ENCODE measurements at regions of chr2 and their contacts with region 1.

Region 1: DNA sequence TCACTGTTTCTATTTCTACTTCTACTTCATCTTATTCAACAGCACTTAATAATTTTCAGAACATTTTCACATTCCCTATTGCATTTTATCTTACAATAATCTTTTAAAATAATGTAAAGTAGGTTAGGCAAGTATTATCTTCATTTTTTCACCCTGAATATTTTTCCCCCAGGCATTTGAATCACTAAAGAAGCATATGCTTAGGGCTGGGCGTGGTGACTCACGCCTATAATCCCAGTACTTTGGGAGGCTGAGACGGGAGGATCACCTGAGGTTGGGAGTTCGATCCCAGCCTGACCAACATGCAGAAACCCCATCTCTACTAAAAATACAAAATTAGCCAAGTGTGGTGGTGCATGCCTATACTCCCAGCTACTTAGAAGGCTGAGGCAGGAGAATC is 6.7 kb downstream of the WDCP start:
- DNase-seq: no peak
- H3K4me3 ChIP-seq: no peak overlapping the region
- H3K27ac ChIP-seq: no peak overlapping the region
- H3K4me1 ChIP-seq: no peaks in the 10 kb centered on the region
- H3K27me3 ChIP-seq: no peaks in the 10 kb centered on the region
- CTCF ChIP-seq: no peak
- EP300 ChIP-seq: no peak
- RAD21 ChIP-seq: no peak

Region 2: GRCh38 chr2:24015562-24016346 is 24.8 kb before region 1 on chr2:
- CTCF ChIA-PET with region 1: no interaction called
- POLR2A ChIA-PET with region 1: interaction called, 10 read pairs
- DNase-seq: peak; percentile 56
- H3K4me3 ChIP-seq: no peak overlapping the region
- H3K27ac ChIP-seq: peak overlapping the region in 1 of 2 experiments; percentile 82; a peak in 2 of 4 replicates
- H3K4me1 ChIP-seq: peaks cover 3 to 12% of the 10 kb centered on the region in 2 experiments; a peak in 3 of 4 replicates
- H3K27me3 ChIP-seq: no peaks in the 10 kb centered on the region
- CTCF ChIP-seq: no peak
- EP300 ChIP-seq: no peak
- RAD21 ChIP-seq: no peak

Measured in SK-N-SH (cell line).